ENCODE measurements at regions of chr3 and their contacts with region 1.

Region 1: GRCh38 chr3:184937611-184938010 is 125.6 kb downstream of the VPS8 start:
- DNase-seq: no peak
- H3K4me3 ChIP-seq: no peak overlapping the region
- H3K27ac ChIP-seq: no peak overlapping the region
- H3K4me1 ChIP-seq: peaks cover 5% of the 10 kb centered on the region
- CTCF ChIP-seq: no peak

Region 2: GRCh38 chr3:184874709-184875644 is 62.6 kb before region 1 on chr3:
- CTCF ChIA-PET with region 1: no interaction called
- POLR2A ChIA-PET with region 1: no interaction called
- intact Hi-C with region 1: no loop called
- DNase-seq: peak; percentile 45
- H3K4me3 ChIP-seq: no peak overlapping the region
- H3K27ac ChIP-seq: no peak overlapping the region
- H3K4me1 ChIP-seq: no peaks in the 10 kb centered on the region
- CTCF ChIP-seq: peak; percentile 84

Region 3: GRCh38 chr3:184952671-184953070 is 15.1 kb after region 1 on chr3:
- CTCF ChIA-PET with region 1: no interaction called
- POLR2A ChIA-PET with region 1: interaction called, 10 read pairs
- intact Hi-C with region 1: no loop called
- DNase-seq: no peak
- H3K4me3 ChIP-seq: no peak overlapping the region
- H3K27ac ChIP-seq: no peak overlapping the region
- H3K4me1 ChIP-seq: no peaks in the 10 kb centered on the region
- CTCF ChIP-seq: no peak

Measured in OCI-LY7 (cell line).